Adrenal gland (tissue), 19 donors: ENCODE measurements at regions of chr7 and their contacts with region 1.

Region 1: GRCh38 chr7:74449809-74450397 is 3.8 kb upstream of the GTF2IRD1 start:
- DNase-seq: peak; percentile 48 to 83 (median 66)
- H3K4me3 ChIP-seq: no peak overlapping the region
- H3K27ac ChIP-seq: no peak overlapping the region
- H3K4me1 ChIP-seq: peaks cover 11 to 12% of the 10 kb centered on the region in 2 donors
- H3K27me3 ChIP-seq: no peaks in the 10 kb centered on the region
- CTCF ChIP-seq: peak; percentile 69 to 81 (median 74)
- POLR2A ChIP-seq: no peak

Region 2: GRCh38 chr7:74502181-74502891 is 52.4 kb after region 1 on chr7:
- intact Hi-C with region 1: loop called in 1 of 2 experiments (anchors 10 kb)
- DNase-seq: peak; percentile 76 to 88 (median 83)
- H3K4me3 ChIP-seq: no peak overlapping the region
- H3K27ac ChIP-seq: peak overlapping the region; percentile 32 to 71 (median 60)
- H3K4me1 ChIP-seq: peaks cover 24 to 31% of the 10 kb centered on the region in 2 donors
- H3K27me3 ChIP-seq: no peaks in the 10 kb centered on the region
- CTCF ChIP-seq: no peak
- POLR2A ChIP-seq: no peak